Transverse colon (tissue), 4 donors: ENCODE measurements at regions of chr5 and their contacts with region 1.

Region 1: DNA sequence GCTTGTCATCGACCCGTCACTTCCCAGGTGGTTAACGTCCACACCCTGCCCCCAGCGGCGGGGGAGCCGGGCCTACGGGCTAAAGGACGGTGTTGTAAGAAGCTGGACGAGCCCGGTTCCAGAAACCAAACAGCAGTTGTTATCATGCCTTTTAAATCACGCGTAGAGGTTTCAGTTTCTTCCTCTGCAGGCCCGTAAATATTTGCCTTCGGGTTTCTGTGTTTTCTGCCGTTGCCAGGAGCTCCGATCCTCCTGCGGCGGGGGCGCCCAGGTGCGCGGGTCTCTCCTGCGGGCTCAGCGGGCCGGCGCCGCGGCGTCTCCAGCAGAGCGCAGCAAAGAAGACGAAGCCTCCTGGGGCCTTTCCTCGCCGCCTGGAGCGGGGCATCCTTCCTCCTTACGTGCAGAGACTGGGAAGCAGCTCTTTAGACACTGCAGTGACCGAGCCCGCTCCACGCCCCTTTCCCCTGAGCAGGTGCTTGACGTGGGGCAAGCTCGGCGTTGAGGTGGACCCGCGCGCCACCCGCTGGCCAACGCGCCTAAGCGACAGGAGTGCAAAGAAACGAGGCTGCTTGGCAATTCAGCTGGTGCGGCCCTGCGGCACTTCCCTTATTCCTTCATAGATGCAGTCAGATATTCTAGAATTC is 21.8 kb upstream of the TTC1 start:
- DNase-seq: peak; percentile 87
- H3K4me3 ChIP-seq: peak overlapping the region; percentile 6 to 53 (median 30)
- H3K27ac ChIP-seq: no peak overlapping the region
- H3K4me1 ChIP-seq: peaks cover 0 to 7% (median 0%) of the 10 kb centered on the region in 4 donors
- H3K27me3 ChIP-seq: peaks cover 35% of the 10 kb centered on the region
- CTCF ChIP-seq: peak; percentile 65 to 78 (median 71)
- EP300 ChIP-seq: no peak
- POLR2A ChIP-seq: no peak

Region 2: GRCh38 chr5:159156426-159157238 is 830.5 kb before region 1 on chr5:
- in situ Hi-C with region 1: loop called in 2 of 4 experiments (anchors 25 kb)
- intact Hi-C with region 1: no loop called
- DNase-seq: peak; percentile 10
- H3K4me3 ChIP-seq: no peak overlapping the region
- H3K27ac ChIP-seq: peak overlapping the region in 1 of 4 donors; percentile 6
- H3K4me1 ChIP-seq: peaks cover 0 to 9% (median 3%) of the 10 kb centered on the region in 4 donors
- H3K27me3 ChIP-seq: no peaks in the 10 kb centered on the region
- CTCF ChIP-seq: peak; percentile 79 to 89 (median 86)
- EP300 ChIP-seq: no peak
- POLR2A ChIP-seq: no peak

Region 3: GRCh38 chr5:159316519-159317383 is 670.4 kb before region 1 on chr5:
- in situ Hi-C with region 1: loop called in 1 of 4 experiments (anchors 25 kb)
- intact Hi-C with region 1: no loop called
- DNase-seq: peak; percentile 41
- H3K4me3 ChIP-seq: no peak overlapping the region
- H3K27ac ChIP-seq: no peak overlapping the region
- H3K4me1 ChIP-seq: no peaks in the 10 kb centered on the region
- H3K27me3 ChIP-seq: peaks cover 6% of the 10 kb centered on the region
- CTCF ChIP-seq: peak; percentile 33 to 55 (median 50)
- EP300 ChIP-seq: no peak
- POLR2A ChIP-seq: no peak

Region 4: GRCh38 chr5:159444441-159445082 is 542.6 kb before region 1 on chr5:
- in situ Hi-C with region 1: loop called in 1 of 4 experiments (anchors 10 kb)
- intact Hi-C with region 1: loop called (anchors 5 kb)
- DNase-seq: no peak
- H3K4me3 ChIP-seq: no peak overlapping the region
- H3K27ac ChIP-seq: no peak overlapping the region
- H3K4me1 ChIP-seq: no peaks in the 10 kb centered on the region
- H3K27me3 ChIP-seq: no peaks in the 10 kb centered on the region
- CTCF ChIP-seq: peak in 2 of 5 experiments; percentile 29 to 32
- EP300 ChIP-seq: no peak
- POLR2A ChIP-seq: no peak

Region 5: DNA sequence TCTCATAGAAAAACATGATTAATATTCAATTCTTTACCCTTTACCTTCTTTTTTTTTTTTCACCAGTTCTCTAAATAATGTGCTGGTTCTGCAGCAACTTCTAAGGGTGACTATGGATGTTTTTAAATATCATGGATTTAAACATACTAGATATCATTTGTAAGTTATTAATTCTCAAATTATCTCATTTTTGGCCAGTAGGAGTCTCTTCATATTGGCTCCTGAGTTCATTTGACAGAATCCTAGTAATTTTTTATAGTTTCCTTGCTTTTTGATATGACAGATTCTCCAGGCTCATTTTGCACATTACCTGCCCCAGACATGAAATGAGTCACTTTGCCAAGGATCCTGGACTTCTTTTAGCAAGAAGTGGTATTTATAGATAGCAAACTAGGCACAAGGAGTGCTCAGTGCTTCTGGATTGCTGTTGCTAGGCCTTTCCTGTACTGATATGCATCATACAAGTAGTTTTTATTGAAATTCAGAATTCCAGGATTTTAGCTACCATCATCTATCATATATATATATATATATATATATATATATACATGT is 455.5 kb before region 1 on chr5:
- in situ Hi-C with region 1: loop called in 1 of 4 experiments (anchors 25 kb)
- intact Hi-C with region 1: no loop called
- DNase-seq: no peak
- H3K4me3 ChIP-seq: no peak overlapping the region
- H3K27ac ChIP-seq: no peak overlapping the region
- H3K4me1 ChIP-seq: no peaks in the 10 kb centered on the region
- H3K27me3 ChIP-seq: no peaks in the 10 kb centered on the region
- CTCF ChIP-seq: no peak
- EP300 ChIP-seq: no peak
- POLR2A ChIP-seq: no peak

Region 6: DNA sequence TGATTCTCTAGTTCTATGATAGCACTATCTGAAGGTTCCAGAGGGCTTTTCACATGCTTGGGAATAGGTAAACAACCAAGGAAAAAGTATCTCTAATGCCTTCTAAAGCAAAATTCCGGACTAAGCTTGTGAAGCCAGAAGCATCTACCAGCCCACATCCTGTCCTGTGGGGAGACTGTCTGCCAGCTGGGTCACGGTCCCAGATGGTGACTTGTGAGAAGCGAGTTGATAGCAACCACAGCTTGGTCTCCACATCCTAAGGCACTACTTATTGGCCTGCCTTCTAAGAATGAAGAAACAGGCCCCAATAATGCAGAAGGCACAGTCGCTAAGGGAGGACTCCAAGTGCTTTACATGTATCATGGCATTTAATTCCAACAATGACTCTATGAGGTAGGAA is 254.9 kb before region 1 on chr5:
- in situ Hi-C with region 1: no loop called
- intact Hi-C with region 1: no loop called
- DNase-seq: no peak
- H3K4me3 ChIP-seq: no peak overlapping the region
- H3K27ac ChIP-seq: no peak overlapping the region
- H3K4me1 ChIP-seq: no peaks in the 10 kb centered on the region
- H3K27me3 ChIP-seq: no peaks in the 10 kb centered on the region
- CTCF ChIP-seq: no peak
- EP300 ChIP-seq: no peak
- POLR2A ChIP-seq: no peak